ENCODE measurements at regions of chr1 and their contacts with region 1.

Region 1: GRCh38 chr1:168065506-168065905 is 71.2 kb downstream of the GPR161 start:
- DNase-seq: no peak
- H3K4me3 ChIP-seq: no peak overlapping the region
- H3K27ac ChIP-seq: no peak overlapping the region
- H3K4me1 ChIP-seq: no peaks in the 10 kb centered on the region
- H3K27me3 ChIP-seq: no peaks in the 10 kb centered on the region
- CTCF ChIP-seq: no peak
- POLR2A ChIP-seq: no peak

Region 2: GRCh38 chr1:167548059-167548932 is 517.2 kb before region 1 on chr1:
- CTCF ChIA-PET with region 1: no interaction called
- POLR2A ChIA-PET with region 1: no interaction called
- dilution Hi-C with region 1: no loop called
- intact Hi-C with region 1: no loop called
- DNase-seq: no peak
- H3K4me3 ChIP-seq: no peak overlapping the region
- H3K27ac ChIP-seq: no peak overlapping the region
- H3K4me1 ChIP-seq: no peaks in the 10 kb centered on the region
- H3K27me3 ChIP-seq: peaks cover 0 to 2% of the 10 kb centered on the region in 2 experiments
- CTCF ChIP-seq: no peak
- POLR2A ChIP-seq: no peak

Region 3: GRCh38 chr1:168019407-168019806 is 46.1 kb before region 1 on chr1:
- CTCF ChIA-PET with region 1: no interaction called
- POLR2A ChIA-PET with region 1: no interaction called
- dilution Hi-C with region 1: no loop called
- intact Hi-C with region 1: no loop called
- DNase-seq: no peak
- H3K4me3 ChIP-seq: no peak overlapping the region
- H3K27ac ChIP-seq: no peak overlapping the region
- H3K4me1 ChIP-seq: no peaks in the 10 kb centered on the region
- H3K27me3 ChIP-seq: no peaks in the 10 kb centered on the region
- CTCF ChIP-seq: no peak
- POLR2A ChIP-seq: no peak

Region 4: DNA sequence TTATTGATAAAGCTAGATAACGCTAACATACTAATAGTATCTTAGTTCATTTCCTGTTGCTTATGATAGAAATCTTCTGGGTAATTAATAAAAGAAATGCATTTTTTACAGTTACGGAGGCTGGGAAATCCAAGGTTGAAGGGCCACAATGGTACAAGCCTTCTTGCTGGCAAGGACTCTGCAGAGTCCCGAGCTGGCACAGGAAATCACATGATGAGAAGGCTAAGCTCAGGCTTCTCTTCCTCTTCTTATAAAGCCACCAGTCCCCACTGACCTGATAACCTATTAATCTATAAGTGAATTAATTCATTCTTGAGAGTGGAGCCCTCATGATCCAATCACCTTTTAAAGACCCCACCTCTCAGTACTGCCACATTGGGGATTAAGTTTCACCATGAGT is 11.4 kb before region 1 on chr1:
- CTCF ChIA-PET with region 1: interaction called, 11 read pairs
- POLR2A ChIA-PET with region 1: no interaction called
- dilution Hi-C with region 1: no loop called
- intact Hi-C with region 1: no loop called
- DNase-seq: no peak
- H3K4me3 ChIP-seq: no peak overlapping the region
- H3K27ac ChIP-seq: no peak overlapping the region
- H3K4me1 ChIP-seq: no peaks in the 10 kb centered on the region
- H3K27me3 ChIP-seq: no peaks in the 10 kb centered on the region
- CTCF ChIP-seq: no peak
- POLR2A ChIP-seq: no peak

Region 5: GRCh38 chr1:168097921-168098528 is 32.5 kb after region 1 on chr1:
- CTCF ChIA-PET with region 1: no interaction called
- POLR2A ChIA-PET with region 1: no interaction called
- dilution Hi-C with region 1: no loop called
- intact Hi-C with region 1: loop called (anchors 1 kb)
- DNase-seq: no peak
- H3K4me3 ChIP-seq: no peak overlapping the region
- H3K27ac ChIP-seq: no peak overlapping the region
- H3K4me1 ChIP-seq: no peaks in the 10 kb centered on the region
- H3K27me3 ChIP-seq: no peaks in the 10 kb centered on the region
- CTCF ChIP-seq: no peak
- POLR2A ChIP-seq: no peak

Measured in endothelial cell of umbilical vein (primary cell).